Vagina (tissue), 2 donors: ENCODE measurements at regions of chr20 and their contacts with region 1.

Region 1: GRCh38 chr20:49046087-49046900 is at the start of gene CSE1L:
- DNase-seq: peak; percentile 95 to 98
- H3K4me3 ChIP-seq: peak within 1 kb of the TSS; percentile 78 to 99
- H3K27ac ChIP-seq: peak within 1 kb of the TSS; percentile 96
- H3K4me1 ChIP-seq: peaks cover 28% of the 10 kb centered on the region
- H3K27me3 ChIP-seq: no peaks in the 10 kb centered on the region
- CTCF ChIP-seq: peak in 1 of 3 experiments; percentile 51
- POLR2A ChIP-seq: peak in 1 of 2 donors; percentile 85
- total RNA-seq, gene CSE1L: 39.0 TPM

Region 2: GRCh38 chr20:49063279-49063678 is 17.0 kb after region 1 on chr20:
- intact Hi-C with region 1: loop called (anchors 1 kb)
- DNase-seq: no peak
- H3K4me3 ChIP-seq: no peak overlapping the region
- H3K27ac ChIP-seq: no peak overlapping the region
- H3K4me1 ChIP-seq: no peaks in the 10 kb centered on the region
- H3K27me3 ChIP-seq: no peaks in the 10 kb centered on the region
- CTCF ChIP-seq: no peak
- POLR2A ChIP-seq: no peak